Activated B cell treated with CpG ODN at 0.5 μM for 24 hours (primary cell): ENCODE measurements at regions of chr3 and their contacts with region 1.

Region 1: GRCh38 chr3:134212906-134213665 is 37.6 kb downstream of the RYK start:
- DNase-seq: peak; percentile 73
- ATAC-seq: peak; percentile 82
- H3K4me3 Mint-ChIP-seq: no peak overlapping the region
- H3K27ac Mint-ChIP-seq: no peak overlapping the region
- H3K4me1 Mint-ChIP-seq: peaks cover 18% of the 10 kb centered on the region
- H3K27me3 Mint-ChIP-seq: no peaks in the 10 kb centered on the region
- CTCF ChIP-seq: peak; percentile 47

Region 2: GRCh38 chr3:134149286-134149685 is 63.8 kb before region 1 on chr3:
- CTCF ChIA-PET with region 1: no interaction called
- POLR2A ChIA-PET with region 1: no interaction called
- intact Hi-C with region 1: no loop called
- DNase-seq: no peak
- ATAC-seq: no peak
- H3K4me3 Mint-ChIP-seq: no peak overlapping the region
- H3K27ac Mint-ChIP-seq: no peak overlapping the region
- H3K4me1 Mint-ChIP-seq: peaks cover 9% of the 10 kb centered on the region
- H3K27me3 Mint-ChIP-seq: no peaks in the 10 kb centered on the region
- CTCF ChIP-seq: no peak

Region 3: GRCh38 chr3:134197681-134198261 is 15.3 kb before region 1 on chr3:
- CTCF ChIA-PET with region 1: interaction called, 66 read pairs
- POLR2A ChIA-PET with region 1: no interaction called
- intact Hi-C with region 1: loop called (anchors 2 kb)
- DNase-seq: no peak
- ATAC-seq: peak; percentile 68
- H3K4me3 Mint-ChIP-seq: no peak overlapping the region
- H3K27ac Mint-ChIP-seq: no peak overlapping the region
- H3K4me1 Mint-ChIP-seq: no peaks in the 10 kb centered on the region
- H3K27me3 Mint-ChIP-seq: no peaks in the 10 kb centered on the region
- CTCF ChIP-seq: no peak

Region 4: DNA sequence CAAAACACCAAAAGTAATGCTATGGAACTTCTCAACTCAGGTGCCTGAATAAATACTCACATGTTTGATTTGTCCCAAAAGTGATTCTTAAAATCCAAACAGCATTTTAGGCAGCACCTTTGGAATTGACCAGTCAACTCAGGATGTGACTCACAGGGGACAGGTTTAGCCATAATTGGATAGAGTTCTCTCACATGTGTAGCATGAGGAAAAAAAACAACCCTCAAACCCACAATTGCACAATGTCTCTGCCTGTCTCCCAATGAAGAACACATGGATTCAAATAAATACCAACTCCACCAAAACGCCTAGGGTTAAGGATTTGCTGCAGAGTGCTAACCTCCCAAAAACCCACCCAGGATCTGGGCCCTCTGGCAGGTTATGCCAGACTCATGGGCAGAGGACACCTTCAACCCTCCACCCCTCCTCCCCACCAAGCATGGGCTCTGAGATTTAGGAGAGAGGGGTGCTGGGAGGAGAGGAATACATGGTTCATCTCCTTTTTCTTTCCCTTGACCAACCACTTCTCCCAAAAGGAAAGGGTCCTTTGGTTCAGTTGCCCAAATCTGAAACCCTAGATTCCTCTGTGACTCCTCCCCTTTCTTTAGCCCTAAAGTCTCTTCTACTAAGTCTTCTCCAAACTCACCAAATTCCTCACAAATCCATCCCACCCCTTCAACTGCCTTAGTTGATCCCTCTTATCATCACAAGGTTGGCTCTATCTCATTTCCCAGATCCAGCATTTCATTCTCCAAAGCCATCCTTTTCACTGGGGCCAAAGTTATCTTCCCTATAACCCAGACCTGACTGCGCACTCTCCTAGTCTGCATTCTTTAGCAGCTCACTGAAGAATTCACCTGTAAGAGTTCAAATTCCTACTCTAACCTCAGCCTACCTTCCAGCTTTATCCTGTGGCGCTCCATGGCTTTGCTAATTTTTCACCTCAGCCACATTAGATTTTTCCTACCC is 29.8 kb after region 1 on chr3:
- CTCF ChIA-PET with region 1: interaction called, 23 read pairs
- POLR2A ChIA-PET with region 1: no interaction called
- intact Hi-C with region 1: no loop called
- DNase-seq: no peak
- ATAC-seq: no peak
- H3K4me3 Mint-ChIP-seq: no peak overlapping the region
- H3K27ac Mint-ChIP-seq: no peak overlapping the region
- H3K4me1 Mint-ChIP-seq: peaks cover 71% of the 10 kb centered on the region
- H3K27me3 Mint-ChIP-seq: no peaks in the 10 kb centered on the region
- CTCF ChIP-seq: no peak

Region 5: GRCh38 chr3:134299185-134299887 is 86.2 kb after region 1 on chr3:
- CTCF ChIA-PET with region 1: interaction called, 7 read pairs
- POLR2A ChIA-PET with region 1: no interaction called
- intact Hi-C with region 1: loop called (anchors 2 kb)
- DNase-seq: no peak
- ATAC-seq: no peak
- H3K4me3 Mint-ChIP-seq: no peak overlapping the region
- H3K27ac Mint-ChIP-seq: no peak overlapping the region
- H3K4me1 Mint-ChIP-seq: no peaks in the 10 kb centered on the region
- H3K27me3 Mint-ChIP-seq: peaks cover 7% of the 10 kb centered on the region
- CTCF ChIP-seq: no peak

Region 6: GRCh38 chr3:134357261-134358184 is 144.4 kb after region 1 on chr3:
- CTCF ChIA-PET with region 1: no interaction called
- POLR2A ChIA-PET with region 1: no interaction called
- intact Hi-C with region 1: no loop called
- DNase-seq: no peak
- ATAC-seq: no peak
- H3K4me3 Mint-ChIP-seq: no peak overlapping the region
- H3K27ac Mint-ChIP-seq: no peak overlapping the region
- H3K4me1 Mint-ChIP-seq: no peaks in the 10 kb centered on the region
- H3K27me3 Mint-ChIP-seq: peaks cover 8% of the 10 kb centered on the region
- CTCF ChIP-seq: no peak

Region 7: DNA sequence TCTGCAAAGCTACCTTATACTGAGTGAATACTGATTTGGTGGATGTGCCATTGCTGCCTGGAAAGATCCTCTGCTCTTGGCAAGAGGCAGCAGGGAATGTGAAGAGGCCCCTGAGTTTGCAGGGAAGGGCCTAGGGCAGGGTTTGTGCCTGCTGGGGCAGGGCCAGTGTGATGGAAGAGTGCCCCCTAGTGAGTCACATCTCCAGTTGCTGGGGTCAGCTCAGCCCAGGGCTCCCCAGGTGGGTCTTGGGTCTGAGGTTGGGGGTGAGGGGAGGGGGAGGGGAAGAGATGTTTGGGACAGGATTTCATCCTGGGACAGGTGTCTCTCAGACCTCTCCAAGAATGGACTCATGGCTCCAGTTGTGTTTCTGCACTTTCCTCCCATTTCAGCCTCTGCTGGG is 165.3 kb after region 1 on chr3:
- CTCF ChIA-PET with region 1: interaction called, 5 read pairs
- POLR2A ChIA-PET with region 1: no interaction called
- intact Hi-C with region 1: loop called (anchors 5 kb)
- DNase-seq: no peak
- ATAC-seq: no peak
- H3K4me3 Mint-ChIP-seq: no peak overlapping the region
- H3K27ac Mint-ChIP-seq: no peak overlapping the region
- H3K4me1 Mint-ChIP-seq: peaks cover 17% of the 10 kb centered on the region
- H3K27me3 Mint-ChIP-seq: peaks cover 38% of the 10 kb centered on the region
- CTCF ChIP-seq: no peak

Region 8: DNA sequence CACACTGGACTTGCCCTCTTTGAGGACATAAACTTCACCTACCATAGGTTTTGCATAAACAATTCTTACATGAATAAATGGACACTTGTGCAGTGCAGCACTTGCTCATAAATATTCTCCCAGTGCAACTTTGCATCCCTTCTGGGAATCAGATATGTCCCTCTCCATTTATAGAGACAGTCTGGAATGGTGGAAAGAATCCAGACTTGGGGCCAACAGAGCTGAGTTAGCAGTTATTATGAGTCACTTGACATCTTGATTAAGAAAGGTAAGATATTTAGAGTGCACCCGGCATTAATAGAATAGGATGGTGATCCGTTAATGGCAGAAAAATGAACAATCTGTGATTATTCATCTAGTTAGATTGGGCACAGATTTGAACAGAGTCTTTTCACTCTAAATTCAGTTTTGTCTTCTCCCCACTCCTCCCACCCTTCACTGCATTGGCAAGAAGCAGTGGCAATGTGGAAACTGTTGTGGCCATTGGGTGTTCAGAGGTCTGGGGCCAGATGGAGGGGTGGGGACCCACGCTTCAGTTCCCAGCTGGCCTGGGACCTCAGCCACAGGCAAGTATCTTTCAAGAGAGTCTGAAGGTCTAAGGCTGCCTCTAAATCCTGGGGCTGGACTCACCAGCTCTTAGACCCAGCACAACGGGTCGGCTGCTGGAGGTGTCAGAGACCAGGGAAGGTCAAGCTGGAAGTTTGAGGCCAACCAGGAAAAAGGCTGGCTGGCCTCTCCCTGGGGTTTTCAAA is 496.7 kb after region 1 on chr3:
- CTCF ChIA-PET with region 1: no interaction called
- POLR2A ChIA-PET with region 1: no interaction called
- intact Hi-C with region 1: no loop called
- DNase-seq: no peak
- ATAC-seq: no peak
- H3K4me3 Mint-ChIP-seq: no peak overlapping the region
- H3K27ac Mint-ChIP-seq: no peak overlapping the region
- H3K4me1 Mint-ChIP-seq: peaks cover 6% of the 10 kb centered on the region
- H3K27me3 Mint-ChIP-seq: no peaks in the 10 kb centered on the region
- CTCF ChIP-seq: no peak